Activated CD4-positive, alpha-beta T cell treated with anti-CD3 and anti-CD28 coated beads, Interleukin-2, amount 10 ng/mL, durations not matched to agents 24 days and 14 days (primary cell): ENCODE measurements at regions of chr1 and their contacts with region 1.

Region 1: GRCh38 chr1:160795951-160796383 is at the start of gene LY9:
- DNase-seq: peak; percentile 93
- H3K4me3 Mint-ChIP-seq: peak within 1 kb of the TSS; percentile 83
- H3K27ac Mint-ChIP-seq: peak within 1 kb of the TSS; percentile 83
- H3K4me1 Mint-ChIP-seq: peaks cover 54% of the 10 kb centered on the region
- H3K27me3 Mint-ChIP-seq: peaks cover 4% of the 10 kb centered on the region
- total RNA-seq, gene LY9: 0.30 and 0.85 TPM in 2 replicates

Region 2: GRCh38 chr1:160744199-160744851 is 51.6 kb before region 1 on chr1:
- intact Hi-C with region 1: loop called (anchors 5 kb)
- DNase-seq: peak; percentile 78
- H3K4me3 Mint-ChIP-seq: peak overlapping the region; percentile 59
- H3K27ac Mint-ChIP-seq: peak overlapping the region; percentile 82
- H3K4me1 Mint-ChIP-seq: peaks cover 77% of the 10 kb centered on the region
- H3K27me3 Mint-ChIP-seq: no peaks in the 10 kb centered on the region

Region 3: GRCh38 chr1:160759705-160760104 is 36.3 kb before region 1 on chr1:
- intact Hi-C with region 1: no loop called
- DNase-seq: no peak
- H3K4me3 Mint-ChIP-seq: no peak overlapping the region
- H3K27ac Mint-ChIP-seq: no peak overlapping the region
- H3K4me1 Mint-ChIP-seq: peaks cover 31% of the 10 kb centered on the region
- H3K27me3 Mint-ChIP-seq: no peaks in the 10 kb centered on the region

Region 4: DNA sequence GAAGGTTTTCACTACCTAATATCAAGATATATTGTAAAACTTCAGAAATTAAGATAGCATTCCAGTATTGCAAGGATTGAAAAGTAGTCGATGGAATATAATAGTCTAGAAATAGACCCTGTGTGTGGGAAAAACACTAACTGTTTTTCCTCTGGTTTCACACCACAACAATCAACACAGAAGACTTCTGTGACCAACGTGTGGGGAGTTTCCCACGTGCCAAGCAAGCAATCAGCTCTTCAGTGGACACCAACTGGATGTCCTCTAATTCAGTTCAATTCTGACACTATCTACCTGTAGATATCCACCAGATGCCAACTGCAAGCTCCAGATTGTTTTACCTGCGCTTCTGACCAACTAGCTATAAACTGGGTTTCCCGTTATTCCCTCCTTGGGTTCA is 54.6 kb after region 1 on chr1:
- intact Hi-C with region 1: no loop called
- DNase-seq: no peak
- H3K4me3 Mint-ChIP-seq: no peak overlapping the region
- H3K27ac Mint-ChIP-seq: no peak overlapping the region
- H3K4me1 Mint-ChIP-seq: no peaks in the 10 kb centered on the region
- H3K27me3 Mint-ChIP-seq: peaks cover 14% of the 10 kb centered on the region